Cardiac septum (tissue), 1 donor: ENCODE measurements at regions of chr9 and their contacts with region 1.

Region 1: DNA sequence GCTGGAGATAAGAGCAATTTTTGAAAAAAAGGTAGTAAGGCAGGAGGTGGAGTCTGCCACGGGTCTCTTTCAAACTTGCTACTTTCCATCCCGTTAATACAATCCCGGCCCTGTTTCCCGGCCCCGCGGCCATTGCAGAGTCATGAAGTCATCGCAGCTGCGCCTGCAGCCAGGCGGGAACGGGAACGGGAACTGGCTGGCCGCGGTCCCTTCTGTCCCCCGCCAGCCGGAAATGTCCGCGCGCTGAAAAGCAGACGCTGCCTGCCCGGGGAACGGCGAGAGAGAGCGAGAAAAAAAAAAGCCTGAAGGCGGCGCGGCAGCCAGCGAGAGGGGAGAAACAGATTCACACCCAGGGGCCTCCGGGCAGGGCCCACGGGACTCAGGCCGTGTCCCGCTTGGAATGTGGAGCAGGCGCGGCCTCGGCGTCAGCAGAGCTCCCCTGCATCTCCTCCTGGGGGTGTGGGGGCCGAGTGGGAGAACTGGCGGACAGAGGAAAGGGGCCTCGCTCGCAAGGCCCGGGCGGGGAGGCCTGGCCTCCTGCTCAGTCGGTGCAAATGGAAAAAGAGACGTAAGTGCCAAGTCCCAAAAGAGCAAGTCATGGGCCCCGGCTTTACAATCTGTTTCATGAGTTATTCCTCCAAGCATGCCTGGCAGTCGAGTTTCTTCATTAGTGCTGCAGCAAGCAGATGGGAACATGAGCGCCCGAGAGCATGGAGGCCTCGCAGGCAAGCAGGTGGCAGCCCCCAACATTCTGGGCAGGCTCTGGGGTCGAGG is 201.2 kb upstream of the GAS1 start:
- DNase-seq: peak; percentile 91

Region 2: DNA sequence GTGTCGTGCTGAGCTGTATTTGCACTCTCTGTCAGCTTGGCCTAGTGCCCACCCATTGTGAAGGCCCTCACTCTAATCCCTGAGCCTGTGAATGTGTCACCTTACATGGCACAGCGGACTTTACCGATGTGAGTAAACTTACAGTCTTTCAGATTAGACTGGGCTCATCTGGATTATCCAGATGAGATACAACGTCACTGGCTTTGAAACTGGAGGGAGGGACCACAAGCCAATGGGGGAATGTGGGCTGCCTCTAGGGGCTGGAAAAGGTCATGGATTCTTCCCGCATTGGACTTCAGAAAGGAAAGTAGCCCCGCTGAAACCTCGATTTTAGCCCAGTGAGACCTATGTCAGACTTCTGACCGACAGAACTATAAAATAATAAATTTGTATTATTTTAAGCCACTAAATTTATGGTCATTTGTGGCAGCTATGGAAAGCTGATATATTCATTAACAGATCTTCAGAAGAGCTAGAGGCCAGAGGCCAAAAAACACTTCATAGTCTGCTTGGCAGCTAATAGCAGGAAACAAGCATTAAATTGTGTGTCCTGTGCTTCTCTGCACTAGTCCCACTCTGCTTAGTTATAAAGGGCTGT is 62.2 kb before region 1 on chr9:
- intact Hi-C with region 1: loop called (anchors 5 kb)
- DNase-seq: no peak

Region 3: DNA sequence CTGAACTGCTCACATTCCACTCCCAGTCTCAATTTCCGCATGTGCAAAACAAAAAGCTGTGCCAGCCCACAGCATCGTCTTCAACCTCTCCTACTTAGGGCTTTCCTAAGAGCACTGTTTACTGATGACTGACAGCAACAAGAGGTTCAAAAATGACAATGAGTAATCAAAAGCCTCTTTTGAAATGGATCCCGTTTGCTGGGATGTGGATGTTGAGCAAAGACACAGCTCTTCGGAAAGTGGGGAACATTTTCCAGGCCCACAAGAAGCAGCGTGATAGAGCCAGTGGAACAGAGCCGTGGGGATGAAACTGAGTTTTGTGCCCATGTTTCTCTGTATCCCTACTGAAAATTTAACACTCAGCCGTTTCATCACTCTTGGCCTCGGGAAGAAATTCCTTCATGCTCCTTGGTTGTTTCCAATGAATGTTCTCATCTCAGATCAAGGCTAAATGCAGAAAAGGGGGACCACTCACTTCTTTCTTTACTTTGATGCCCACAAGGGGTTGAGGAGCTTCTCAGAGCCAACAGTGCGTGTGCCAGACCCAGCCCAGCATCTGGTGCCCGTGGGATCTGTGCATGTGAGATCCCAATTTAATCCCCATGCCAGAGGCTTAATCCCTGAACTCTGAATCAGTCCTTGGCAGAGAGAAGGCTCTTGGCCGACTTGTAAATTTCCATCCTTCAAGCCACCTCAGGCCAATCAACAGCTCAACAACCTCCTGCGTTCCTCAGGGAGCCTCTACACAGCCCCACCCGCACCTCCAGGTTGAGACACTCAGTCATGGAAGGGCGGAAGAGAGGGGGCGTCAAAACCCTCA is 118.9 kb after region 1 on chr9:
- intact Hi-C with region 1: loop called (anchors 5 kb)
- DNase-seq: no peak